Activated CD8-positive, alpha-beta T cell treated with anti-CD3 and anti-CD28 coated beads, Interleukin-2, amount 10 ng/mL, durations not matched to agents 7 days and 5 days (primary cell): ENCODE measurements at regions of chr1 and their contacts with region 1.

Region 1: DNA sequence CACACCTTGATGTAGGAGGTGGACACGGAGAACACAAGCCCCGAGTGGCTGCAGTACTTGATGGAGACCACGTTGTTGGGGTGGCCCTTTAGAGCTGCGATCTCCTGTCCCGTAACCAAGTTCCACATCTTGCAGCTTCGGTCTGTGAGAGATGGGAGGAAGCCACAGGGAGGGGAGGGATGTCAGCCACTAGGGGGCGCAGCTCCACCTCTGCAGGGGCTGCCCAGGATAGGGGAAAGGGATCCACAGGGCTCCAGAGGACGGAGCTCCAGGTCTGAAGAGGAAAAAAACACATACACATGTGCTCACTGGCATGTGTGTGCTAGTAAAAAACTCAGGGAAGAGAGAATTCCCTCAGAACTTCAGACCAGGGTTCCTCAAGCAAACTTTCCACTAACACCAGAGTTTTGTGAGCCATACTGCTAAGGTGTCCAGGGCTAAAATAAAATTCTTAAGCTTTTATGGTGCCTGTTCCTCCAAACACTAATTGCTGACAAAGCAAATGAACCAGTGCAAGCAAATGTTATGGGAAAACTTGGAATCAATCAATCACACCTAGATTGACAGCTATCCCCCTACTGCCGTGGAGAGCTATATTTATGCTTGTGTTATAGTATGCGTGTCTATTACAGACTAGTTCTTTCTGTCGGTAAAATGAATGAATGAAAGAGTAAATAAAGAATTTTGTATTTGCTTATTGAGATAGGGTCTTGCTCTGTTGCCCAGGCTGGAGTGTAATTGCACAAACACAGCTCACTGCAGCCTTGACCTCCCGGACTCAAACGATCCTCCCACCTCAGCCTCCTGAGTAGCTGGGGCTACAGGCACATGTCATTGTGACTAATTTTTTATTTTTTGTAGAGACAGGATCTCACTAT is 43.7 kb downstream of the KIF21B start:
- DNase-seq: peak; percentile 75
- ATAC-seq: peak; percentile 67
- H3K4me3 Mint-ChIP-seq: no peak overlapping the region
- H3K27ac Mint-ChIP-seq: peak overlapping the region; percentile 43
- H3K4me1 Mint-ChIP-seq: no peaks in the 10 kb centered on the region
- H3K27me3 Mint-ChIP-seq: no peaks in the 10 kb centered on the region

Region 2: GRCh38 chr1:200856716-200857352 is 123.0 kb before region 1 on chr1:
- CTCF ChIA-PET with region 1: no interaction called
- POLR2A ChIA-PET with region 1: no interaction called
- DNase-seq: no peak
- ATAC-seq: no peak
- H3K4me3 Mint-ChIP-seq: no peak overlapping the region
- H3K27ac Mint-ChIP-seq: no peak overlapping the region
- H3K4me1 Mint-ChIP-seq: no peaks in the 10 kb centered on the region
- H3K27me3 Mint-ChIP-seq: peaks cover 4% of the 10 kb centered on the region

Region 3: GRCh38 chr1:200990114-200990513 is 10.3 kb after region 1 on chr1:
- CTCF ChIA-PET with region 1: interaction called, 11 read pairs
- POLR2A ChIA-PET with region 1: interaction called, 4 read pairs
- DNase-seq: no peak
- ATAC-seq: no peak
- H3K4me3 Mint-ChIP-seq: no peak overlapping the region
- H3K27ac Mint-ChIP-seq: no peak overlapping the region
- H3K4me1 Mint-ChIP-seq: no peaks in the 10 kb centered on the region
- H3K27me3 Mint-ChIP-seq: no peaks in the 10 kb centered on the region

Region 4: GRCh38 chr1:201009962-201010645 is 30.3 kb after region 1 on chr1:
- CTCF ChIA-PET with region 1: interaction called, 130 read pairs
- POLR2A ChIA-PET with region 1: interaction called, 3 read pairs
- DNase-seq: no peak
- ATAC-seq: no peak
- H3K4me3 Mint-ChIP-seq: no peak overlapping the region
- H3K27ac Mint-ChIP-seq: peak overlapping the region; percentile 76
- H3K4me1 Mint-ChIP-seq: peaks cover 63% of the 10 kb centered on the region
- H3K27me3 Mint-ChIP-seq: no peaks in the 10 kb centered on the region

Region 5: GRCh38 chr1:201023517-201023902 is 43.7 kb after region 1 on chr1 and contains the start of gene KIF21B:
- CTCF ChIA-PET with region 1: interaction called, 130 read pairs
- POLR2A ChIA-PET with region 1: interaction called, 3 read pairs
- DNase-seq: peak; percentile 94
- ATAC-seq: peak; percentile 77
- H3K4me3 Mint-ChIP-seq: peak within 1 kb of the TSS; percentile 93
- H3K27ac Mint-ChIP-seq: peak within 1 kb of the TSS; percentile 100
- H3K4me1 Mint-ChIP-seq: peaks cover 62% of the 10 kb centered on the region
- H3K27me3 Mint-ChIP-seq: no peaks in the 10 kb centered on the region
- total RNA-seq, gene KIF21B: 158 to 162 TPM

Region 6: DNA sequence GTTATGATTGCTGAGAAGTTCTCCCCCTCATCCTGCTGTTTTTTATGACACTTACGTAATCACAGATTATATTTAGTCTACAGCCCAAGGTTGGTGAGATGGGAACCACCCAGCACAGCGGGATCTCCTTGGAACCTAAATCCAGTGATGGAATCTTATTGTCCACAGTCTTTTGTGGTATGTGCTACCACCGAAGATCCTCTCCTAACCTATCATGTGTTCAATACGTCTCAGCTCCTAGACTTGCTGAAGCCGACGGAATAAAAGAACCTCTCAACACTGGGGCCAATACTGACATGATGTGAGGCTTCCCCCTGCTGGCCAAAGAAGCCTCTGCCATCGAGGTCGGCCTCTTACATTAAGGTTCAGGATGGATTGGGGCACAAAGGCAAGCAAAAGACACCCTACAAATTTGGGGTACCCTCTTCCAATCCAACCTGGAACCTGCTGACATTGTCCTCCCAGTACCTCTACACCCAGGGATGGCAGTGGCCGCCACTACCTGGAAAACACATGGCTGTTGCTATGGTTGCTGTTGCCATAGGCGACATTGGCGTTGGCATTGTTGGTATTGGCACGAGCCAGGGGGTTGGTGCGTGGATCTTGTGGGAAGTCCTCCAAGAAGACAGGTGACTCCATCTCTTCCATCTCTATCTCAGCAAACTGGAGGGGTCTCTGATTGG is 63.1 kb after region 1 on chr1:
- CTCF ChIA-PET with region 1: interaction called, 117 read pairs
- POLR2A ChIA-PET with region 1: interaction called, 3 read pairs
- DNase-seq: peak; percentile 79
- ATAC-seq: peak; percentile 91
- H3K4me3 Mint-ChIP-seq: no peak overlapping the region
- H3K27ac Mint-ChIP-seq: no peak overlapping the region
- H3K4me1 Mint-ChIP-seq: no peaks in the 10 kb centered on the region
- H3K27me3 Mint-ChIP-seq: peaks cover 22% of the 10 kb centered on the region

Region 7: GRCh38 chr1:201074018-201074417 is 94.2 kb after region 1 on chr1:
- CTCF ChIA-PET with region 1: no interaction called
- POLR2A ChIA-PET with region 1: no interaction called
- DNase-seq: no peak
- ATAC-seq: no peak
- H3K4me3 Mint-ChIP-seq: no peak overlapping the region
- H3K27ac Mint-ChIP-seq: no peak overlapping the region
- H3K4me1 Mint-ChIP-seq: peaks cover 4% of the 10 kb centered on the region
- H3K27me3 Mint-ChIP-seq: peaks cover 6% of the 10 kb centered on the region

Region 8: DNA sequence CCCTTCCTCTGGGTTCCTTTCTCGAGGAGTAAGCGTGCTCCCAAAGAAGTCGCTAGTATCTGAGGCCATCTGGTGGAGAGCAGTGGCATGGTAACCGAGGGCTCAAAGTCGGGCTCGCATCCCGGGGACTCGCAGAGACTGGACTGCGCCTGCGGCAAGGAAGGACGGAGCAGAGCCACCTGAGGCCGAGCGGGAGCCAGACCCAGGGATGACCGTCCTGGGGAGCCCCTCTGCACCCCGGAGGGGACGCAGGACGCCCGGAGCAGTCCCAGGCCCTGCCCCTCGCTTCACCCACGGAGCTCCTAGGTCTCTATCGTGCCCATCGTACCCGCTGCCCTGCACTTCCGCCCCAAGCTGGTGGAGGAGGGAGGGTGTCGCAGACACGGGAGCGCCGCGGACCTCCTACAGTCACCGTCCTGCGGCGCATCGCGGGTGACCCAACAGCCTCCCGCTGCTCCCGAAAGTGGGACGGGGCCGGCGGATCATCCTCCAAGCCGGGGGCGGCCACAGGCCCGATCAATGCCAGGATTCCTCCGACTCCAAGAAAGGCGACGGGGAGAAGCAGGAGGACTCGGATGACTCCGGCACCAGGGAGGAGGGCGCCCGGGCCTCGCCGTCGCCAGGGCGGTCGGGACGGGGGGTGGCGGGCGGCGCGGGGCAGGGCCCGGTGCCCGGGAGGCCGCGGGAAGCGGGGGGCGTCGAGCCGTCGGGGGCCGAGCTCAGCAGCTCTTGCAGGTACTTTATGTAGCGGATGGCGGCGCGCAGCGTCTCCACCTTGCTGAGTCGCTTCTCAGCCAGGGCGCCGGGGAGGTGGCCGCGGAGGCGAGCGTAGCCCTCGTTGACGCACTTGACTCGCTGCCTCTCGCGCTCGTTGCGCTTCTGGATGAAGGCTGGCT is 134.7 kb after region 1 on chr1:
- CTCF ChIA-PET with region 1: interaction called, 19 read pairs
- POLR2A ChIA-PET with region 1: no interaction called
- DNase-seq: peak; percentile 79
- ATAC-seq: peak; percentile 91
- H3K4me3 Mint-ChIP-seq: peak overlapping the region; percentile 74
- H3K27ac Mint-ChIP-seq: peak overlapping the region; percentile 63
- H3K4me1 Mint-ChIP-seq: peaks cover 8% of the 10 kb centered on the region
- H3K27me3 Mint-ChIP-seq: peaks cover 11% of the 10 kb centered on the region

Region 9: DNA sequence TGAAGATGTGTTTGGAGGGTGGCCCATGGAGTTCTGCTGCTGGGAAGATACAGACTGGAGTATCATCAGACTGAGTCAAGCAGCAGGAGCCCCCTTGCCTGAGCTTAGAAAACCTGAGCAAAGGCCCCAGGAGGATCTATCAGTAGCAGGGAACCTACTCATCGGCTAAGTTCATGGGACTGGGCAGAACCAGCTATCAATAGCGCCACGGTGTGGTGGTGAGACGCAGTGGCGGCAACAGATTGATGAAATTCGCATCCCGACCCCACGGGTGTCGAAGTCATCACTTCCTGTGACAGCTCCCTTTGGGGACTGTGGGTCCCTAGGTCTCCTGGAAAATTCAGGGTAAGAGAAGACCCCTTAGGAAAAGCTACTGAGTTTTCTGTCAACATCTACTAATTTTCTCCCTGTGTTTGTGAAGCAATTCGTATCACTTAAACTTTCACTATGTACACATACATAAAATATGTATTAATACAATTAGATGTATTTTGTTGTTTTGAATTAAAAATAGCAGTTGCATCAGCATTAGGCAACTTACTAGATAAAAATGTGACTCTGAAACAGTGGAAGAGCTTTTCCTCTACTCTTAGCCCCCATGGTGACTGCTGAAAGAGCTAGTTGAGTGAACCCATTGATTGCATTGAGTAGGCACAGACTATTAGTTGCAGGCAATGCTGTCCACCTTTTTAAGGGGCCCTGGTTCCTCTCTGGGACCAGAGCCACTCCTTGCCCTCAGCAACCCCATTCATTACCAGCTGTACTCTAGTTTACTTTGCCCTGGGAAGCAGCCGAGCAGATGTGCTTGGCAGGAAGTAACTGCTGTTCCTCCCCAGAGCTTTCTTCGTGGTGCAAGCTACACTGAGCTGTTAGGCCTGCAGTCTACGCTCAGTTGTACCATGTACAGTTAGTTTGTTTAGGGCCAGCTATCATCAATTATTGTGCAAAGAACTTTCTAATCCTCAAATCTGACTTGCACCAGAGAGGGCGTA is 139.7 kb after region 1 on chr1:
- CTCF ChIA-PET with region 1: interaction called, 19 read pairs
- POLR2A ChIA-PET with region 1: no interaction called
- DNase-seq: peak; percentile 66
- ATAC-seq: no peak
- H3K4me3 Mint-ChIP-seq: no peak overlapping the region
- H3K27ac Mint-ChIP-seq: no peak overlapping the region
- H3K4me1 Mint-ChIP-seq: peaks cover 7% of the 10 kb centered on the region
- H3K27me3 Mint-ChIP-seq: peaks cover 15% of the 10 kb centered on the region

Region 10: DNA sequence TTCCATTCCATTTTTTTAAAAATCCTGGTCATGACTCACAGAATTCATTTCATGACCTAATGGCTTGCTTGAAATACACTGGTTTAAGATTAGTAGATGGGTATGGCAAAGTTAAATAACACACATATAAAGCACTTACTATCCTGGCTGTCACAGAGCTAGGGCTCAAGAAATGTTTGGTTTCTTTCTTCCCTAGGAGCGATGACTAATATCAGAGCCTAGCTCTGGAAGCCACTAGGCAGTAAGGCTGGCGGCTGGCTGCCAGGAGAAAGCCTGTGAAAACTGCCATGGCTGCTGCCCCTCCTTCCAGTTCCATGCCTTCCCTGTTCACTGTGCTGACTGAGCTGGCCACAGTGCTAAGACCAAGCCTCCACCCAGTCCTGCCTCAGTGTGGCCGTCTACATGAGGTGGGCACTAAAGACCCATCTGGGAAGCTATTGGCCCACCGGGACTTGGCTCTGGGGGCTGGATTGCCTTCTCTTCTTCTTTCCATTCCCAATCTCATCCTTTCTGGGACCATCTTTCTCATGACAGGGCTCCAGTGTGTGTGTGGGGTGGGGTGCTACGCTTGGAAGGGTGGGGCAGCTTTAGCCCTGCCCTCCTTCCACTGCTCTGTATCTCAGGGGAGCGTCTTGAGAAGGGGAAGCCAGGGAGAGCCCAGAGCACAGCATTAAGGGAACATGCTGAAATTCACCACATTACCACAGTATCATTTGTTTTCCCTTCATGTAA is 157.9 kb after region 1 on chr1:
- CTCF ChIA-PET with region 1: no interaction called
- POLR2A ChIA-PET with region 1: no interaction called
- DNase-seq: no peak
- ATAC-seq: no peak
- H3K4me3 Mint-ChIP-seq: no peak overlapping the region
- H3K27ac Mint-ChIP-seq: no peak overlapping the region
- H3K4me1 Mint-ChIP-seq: no peaks in the 10 kb centered on the region
- H3K27me3 Mint-ChIP-seq: no peaks in the 10 kb centered on the region